Activated CD8-positive, alpha-beta T cell treated with anti-CD3 and anti-CD28 coated beads, Interleukin-2, amount 10 ng/mL, durations not matched to agents 7 days and 5 days (primary cell): ENCODE measurements at regions of chr9 and their contacts with region 1.

Region 1: GRCh38 chr9:133144137-133144903 is 19.4 kb downstream of the GBGT1 start:
- DNase-seq: peak; percentile 97
- ATAC-seq: peak; percentile 69
- H3K4me3 Mint-ChIP-seq: peak overlapping the region; percentile 69
- H3K27ac Mint-ChIP-seq: peak overlapping the region; percentile 89
- H3K4me1 Mint-ChIP-seq: peaks cover 80% of the 10 kb centered on the region
- H3K27me3 Mint-ChIP-seq: no peaks in the 10 kb centered on the region

Region 2: GRCh38 chr9:132858771-132859170 is 285.5 kb before region 1 on chr9:
- CTCF ChIA-PET with region 1: no interaction called
- POLR2A ChIA-PET with region 1: no interaction called
- DNase-seq: no peak
- ATAC-seq: no peak
- H3K4me3 Mint-ChIP-seq: no peak overlapping the region
- H3K27ac Mint-ChIP-seq: no peak overlapping the region
- H3K4me1 Mint-ChIP-seq: peaks cover 34% of the 10 kb centered on the region
- H3K27me3 Mint-ChIP-seq: peaks cover 8% of the 10 kb centered on the region

Region 3: GRCh38 chr9:132983491-132984201 is 160.7 kb before region 1 on chr9:
- CTCF ChIA-PET with region 1: no interaction called
- POLR2A ChIA-PET with region 1: no interaction called
- DNase-seq: no peak
- ATAC-seq: no peak
- H3K4me3 Mint-ChIP-seq: no peak overlapping the region
- H3K27ac Mint-ChIP-seq: no peak overlapping the region
- H3K4me1 Mint-ChIP-seq: peaks cover 2% of the 10 kb centered on the region
- H3K27me3 Mint-ChIP-seq: peaks cover 40% of the 10 kb centered on the region

Region 4: DNA sequence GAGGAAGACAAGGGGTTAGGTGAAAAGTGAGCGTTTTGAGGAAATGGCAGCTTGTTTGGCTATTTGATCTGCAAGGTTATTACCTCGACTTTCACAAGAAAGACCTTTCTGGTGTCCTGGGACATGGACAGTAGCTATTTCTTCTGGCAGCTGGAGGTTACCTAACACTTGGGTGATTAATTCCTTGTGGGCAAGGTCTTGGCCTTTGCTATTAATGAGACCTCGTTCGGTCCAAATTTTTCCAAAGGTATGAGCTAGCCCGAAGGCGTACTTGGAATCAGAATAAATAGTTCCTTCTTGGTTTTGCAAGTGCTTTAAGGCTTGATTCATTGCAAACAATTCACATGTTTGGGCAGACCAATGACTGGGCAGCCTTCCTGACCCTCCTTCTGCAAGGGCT is 108.7 kb before region 1 on chr9:
- CTCF ChIA-PET with region 1: interaction called, 39 read pairs
- POLR2A ChIA-PET with region 1: interaction called, 18 read pairs
- DNase-seq: no peak
- ATAC-seq: no peak
- H3K4me3 Mint-ChIP-seq: no peak overlapping the region
- H3K27ac Mint-ChIP-seq: no peak overlapping the region
- H3K4me1 Mint-ChIP-seq: peaks cover 16% of the 10 kb centered on the region
- H3K27me3 Mint-ChIP-seq: no peaks in the 10 kb centered on the region

Region 5: GRCh38 chr9:133060417-133060841 is 83.9 kb before region 1 on chr9:
- CTCF ChIA-PET with region 1: interaction called, 20 read pairs
- POLR2A ChIA-PET with region 1: interaction called, 4 read pairs
- DNase-seq: peak; percentile 48
- ATAC-seq: peak; percentile 34
- H3K4me3 Mint-ChIP-seq: peak overlapping the region; percentile 33
- H3K27ac Mint-ChIP-seq: peak overlapping the region; percentile 94
- H3K4me1 Mint-ChIP-seq: peaks cover 65% of the 10 kb centered on the region
- H3K27me3 Mint-ChIP-seq: no peaks in the 10 kb centered on the region

Region 6: GRCh38 chr9:133103183-133103986 is 40.9 kb before region 1 on chr9:
- CTCF ChIA-PET with region 1: interaction called, 421 read pairs
- POLR2A ChIA-PET with region 1: interaction called, 13 read pairs
- DNase-seq: peak; percentile 60
- ATAC-seq: peak; percentile 67
- H3K4me3 Mint-ChIP-seq: no peak overlapping the region
- H3K27ac Mint-ChIP-seq: peak overlapping the region; percentile 77
- H3K4me1 Mint-ChIP-seq: peaks cover 5% of the 10 kb centered on the region
- H3K27me3 Mint-ChIP-seq: no peaks in the 10 kb centered on the region

Region 7: GRCh38 chr9:133121198-133121939 is 23.0 kb before region 1 on chr9 and contains the start of gene RALGDS:
- CTCF ChIA-PET with region 1: interaction called, 421 read pairs
- POLR2A ChIA-PET with region 1: interaction called, 14 read pairs
- DNase-seq: peak; percentile 90
- ATAC-seq: peak; percentile 78
- H3K4me3 Mint-ChIP-seq: peak within 1 kb of the TSS; percentile 76
- H3K27ac Mint-ChIP-seq: peak within 1 kb of the TSS; percentile 90
- H3K4me1 Mint-ChIP-seq: peaks cover 79% of the 10 kb centered on the region
- H3K27me3 Mint-ChIP-seq: no peaks in the 10 kb centered on the region
- total RNA-seq, gene RALGDS: 85.7 to 102 TPM